Breast epithelium (tissue), 4 donors: ENCODE measurements at regions of chr2 and their contacts with region 1.

Region 1: GRCh38 chr2:74893332-74893731 is 59.4 kb downstream of the HK2 start:
- DNase-seq: no peak
- H3K4me3 ChIP-seq: no peak overlapping the region
- H3K27ac ChIP-seq: no peak overlapping the region
- H3K4me1 ChIP-seq: no peaks in the 10 kb centered on the region
- H3K27me3 ChIP-seq: no peaks in the 10 kb centered on the region
- CTCF ChIP-seq: no peak
- POLR2A ChIP-seq: no peak

Region 2: DNA sequence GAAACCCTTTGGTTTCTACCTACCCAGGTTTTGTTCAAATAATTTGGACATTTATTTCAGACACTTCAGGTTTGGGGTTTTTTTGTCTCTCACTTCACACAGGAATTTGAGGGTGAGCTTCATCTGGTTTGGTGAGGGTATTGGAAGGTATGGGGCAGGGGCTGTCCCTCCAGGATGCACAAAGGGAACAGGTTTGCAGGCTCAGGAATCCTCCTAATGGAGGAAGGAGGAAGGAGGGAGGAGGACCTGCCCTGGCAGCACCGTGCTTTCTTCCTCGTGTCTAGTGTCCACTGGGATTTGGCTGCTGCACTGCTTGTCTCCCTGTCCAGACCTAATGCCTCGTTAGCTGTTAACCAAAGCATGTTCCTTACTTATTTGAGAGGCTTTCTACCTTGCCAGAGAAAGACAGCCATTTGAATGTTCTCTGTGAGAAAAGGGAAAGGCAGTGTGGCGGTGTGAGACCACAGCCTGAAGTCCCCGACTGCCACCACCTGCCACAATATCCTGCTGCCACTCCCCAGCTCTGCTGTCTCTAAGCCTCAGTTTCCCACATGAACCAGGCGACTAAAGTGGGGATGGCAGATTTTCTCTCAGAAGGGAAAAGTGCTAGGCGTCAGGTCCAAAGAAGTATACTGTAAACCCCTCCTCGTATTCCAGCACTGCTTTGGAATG is 547.9 kb before region 1 on chr2:
- intact Hi-C with region 1: loop called (anchors 10 kb)
- DNase-seq: no peak
- H3K4me3 ChIP-seq: no peak overlapping the region
- H3K27ac ChIP-seq: no peak overlapping the region
- H3K4me1 ChIP-seq: no peaks in the 10 kb centered on the region
- H3K27me3 ChIP-seq: no peaks in the 10 kb centered on the region
- CTCF ChIP-seq: no peak
- POLR2A ChIP-seq: no peak

Region 3: GRCh38 chr2:74982577-74982976 is 89.2 kb after region 1 on chr2:
- intact Hi-C with region 1: no loop called
- DNase-seq: no peak
- H3K4me3 ChIP-seq: no peak overlapping the region
- H3K27ac ChIP-seq: no peak overlapping the region
- H3K4me1 ChIP-seq: no peaks in the 10 kb centered on the region
- H3K27me3 ChIP-seq: no peaks in the 10 kb centered on the region
- CTCF ChIP-seq: peak in 1 of 3 donors; percentile 12
- POLR2A ChIP-seq: no peak